Activated naive CD4-positive, alpha-beta T cell treated with anti-CD3 and anti-CD28 coated beads for 36 hours (primary cell): ENCODE measurements at regions of chr3 and their contacts with region 1.

Region 1: DNA sequence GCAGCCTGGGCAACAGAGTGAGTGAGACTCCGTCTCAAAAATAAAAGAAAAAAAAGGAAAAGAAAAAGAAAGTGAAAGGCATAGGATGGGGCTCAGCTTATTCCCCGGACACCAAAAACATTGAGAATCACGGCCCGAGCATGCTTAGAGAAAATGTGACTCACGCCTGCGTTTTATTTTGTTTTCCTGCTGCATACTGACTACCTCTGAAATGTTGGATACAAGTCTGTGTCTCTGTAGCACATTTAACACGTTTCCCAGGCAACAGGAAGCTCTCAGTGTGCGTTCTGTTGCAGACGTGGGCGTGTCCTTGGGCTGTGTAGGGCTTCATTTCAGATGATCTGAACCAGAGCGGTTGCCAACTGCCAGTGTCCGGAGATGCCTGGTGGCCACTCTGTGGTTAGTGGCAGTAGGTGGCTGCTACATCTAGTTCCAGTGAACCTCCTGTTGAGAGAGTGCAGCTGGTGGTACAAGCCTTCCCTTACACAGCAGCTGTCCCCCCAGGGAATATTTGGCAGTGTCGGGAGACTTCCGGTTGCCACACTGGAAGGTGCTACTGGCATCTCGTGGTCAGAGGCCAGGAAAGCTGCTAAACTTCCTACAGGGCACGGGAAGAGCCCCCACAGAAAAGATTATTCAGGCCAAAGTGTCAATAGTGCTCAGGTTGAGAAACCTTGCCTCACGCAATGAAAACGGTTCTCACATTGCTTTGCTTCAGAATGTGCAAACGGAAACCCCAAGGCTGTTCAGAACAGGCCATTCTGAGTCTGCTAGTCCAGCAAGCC is 3.1 kb downstream of the SLC51A start:
- DNase-seq: peak; percentile 89
- H3K4me3 Mint-ChIP-seq: peak overlapping the region; percentile 66
- H3K27ac Mint-ChIP-seq: peak overlapping the region; percentile 84
- H3K4me1 Mint-ChIP-seq: peaks cover 26% of the 10 kb centered on the region
- H3K27me3 Mint-ChIP-seq: no peaks in the 10 kb centered on the region

Region 2: GRCh38 chr3:196192036-196192523 is 27.3 kb before region 1 on chr3:
- CTCF ChIA-PET with region 1: interaction called, 3 read pairs
- intact Hi-C with region 1: loop called (anchors 1 kb)
- DNase-seq: peak; percentile 82
- H3K4me3 Mint-ChIP-seq: peak overlapping the region; percentile 55
- H3K27ac Mint-ChIP-seq: peak overlapping the region; percentile 92
- H3K4me1 Mint-ChIP-seq: peaks cover 38% of the 10 kb centered on the region
- H3K27me3 Mint-ChIP-seq: no peaks in the 10 kb centered on the region

Region 3: GRCh38 chr3:196432137-196432879 is 212.9 kb after region 1 on chr3 and contains the start of gene UBXN7:
- CTCF ChIA-PET with region 1: no interaction called
- intact Hi-C with region 1: loop called (anchors 1 kb)
- DNase-seq: peak; percentile 97
- H3K4me3 Mint-ChIP-seq: peak within 1 kb of the TSS; percentile 69
- H3K27ac Mint-ChIP-seq: peak within 1 kb of the TSS; percentile 93
- H3K4me1 Mint-ChIP-seq: peaks cover 15% of the 10 kb centered on the region
- H3K27me3 Mint-ChIP-seq: no peaks in the 10 kb centered on the region
- total RNA-seq, gene UBXN7: 54.2 to 62.5 TPM